ENCODE measurements at regions of chr10 and their contacts with region 1.

Region 1: DNA sequence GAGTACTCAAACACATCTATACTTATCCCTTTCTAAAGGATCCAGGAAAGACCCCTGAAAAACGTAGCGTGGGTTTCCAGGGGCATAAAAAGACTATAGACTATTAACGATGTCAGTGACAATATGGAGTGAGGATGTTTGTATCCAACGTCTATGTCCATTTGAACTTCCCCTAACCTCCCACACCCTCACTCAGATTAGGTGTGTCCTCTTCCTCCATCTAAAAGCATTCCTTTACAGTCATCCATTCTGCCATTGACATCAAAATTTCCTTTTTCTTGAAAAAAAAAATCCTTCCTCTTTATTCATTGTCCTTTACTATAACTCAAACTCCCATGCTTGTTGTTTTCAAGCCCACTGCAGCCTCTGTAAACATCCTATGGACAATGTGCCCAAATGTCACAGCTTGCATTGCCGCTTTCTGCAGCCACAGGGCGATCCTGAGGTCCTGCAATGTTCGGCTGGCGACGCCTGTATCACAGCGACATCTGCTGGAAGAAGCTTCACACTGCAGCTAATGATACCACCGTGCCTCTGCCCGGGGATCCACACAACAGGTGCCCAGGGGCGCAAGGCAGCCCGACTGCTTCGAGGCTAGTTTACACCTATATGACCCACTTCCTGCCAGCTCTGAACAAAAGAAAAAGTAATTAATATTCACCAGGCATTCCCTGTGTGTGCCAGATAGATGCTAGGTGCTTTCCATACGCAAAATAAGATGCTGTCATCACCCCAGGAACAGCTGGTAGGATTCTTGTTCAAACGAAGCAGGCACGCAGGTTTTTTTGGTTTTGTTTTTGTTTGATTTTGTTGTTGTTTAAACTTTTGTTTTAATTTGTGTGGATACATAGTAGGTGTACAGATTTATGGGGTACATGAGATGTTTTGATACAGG is 267.9 kb upstream of the GHITM start:
- DNase-seq: peak; percentile 62
- H3K4me3 Mint-ChIP-seq: no peak overlapping the region
- H3K27ac Mint-ChIP-seq: no peak overlapping the region
- H3K4me1 Mint-ChIP-seq: no peaks in the 10 kb centered on the region
- H3K27me3 Mint-ChIP-seq: peaks cover 14% of the 10 kb centered on the region
- CTCF ChIP-seq: peak; percentile 82

Region 2: GRCh38 chr10:83945982-83946718 is 74.7 kb after region 1 on chr10:
- CTCF ChIA-PET with region 1: interaction called, 10 read pairs
- intact Hi-C with region 1: no loop called
- DNase-seq: no peak
- H3K4me3 Mint-ChIP-seq: no peak overlapping the region
- H3K27ac Mint-ChIP-seq: no peak overlapping the region
- H3K4me1 Mint-ChIP-seq: no peaks in the 10 kb centered on the region
- H3K27me3 Mint-ChIP-seq: peaks cover 19% of the 10 kb centered on the region
- CTCF ChIP-seq: no peak

Measured in Calu3 (cell line).